Mammary epithelial cell (primary cell): ENCODE measurements at regions of chr1 and their contacts with region 1.

Region 1: DNA sequence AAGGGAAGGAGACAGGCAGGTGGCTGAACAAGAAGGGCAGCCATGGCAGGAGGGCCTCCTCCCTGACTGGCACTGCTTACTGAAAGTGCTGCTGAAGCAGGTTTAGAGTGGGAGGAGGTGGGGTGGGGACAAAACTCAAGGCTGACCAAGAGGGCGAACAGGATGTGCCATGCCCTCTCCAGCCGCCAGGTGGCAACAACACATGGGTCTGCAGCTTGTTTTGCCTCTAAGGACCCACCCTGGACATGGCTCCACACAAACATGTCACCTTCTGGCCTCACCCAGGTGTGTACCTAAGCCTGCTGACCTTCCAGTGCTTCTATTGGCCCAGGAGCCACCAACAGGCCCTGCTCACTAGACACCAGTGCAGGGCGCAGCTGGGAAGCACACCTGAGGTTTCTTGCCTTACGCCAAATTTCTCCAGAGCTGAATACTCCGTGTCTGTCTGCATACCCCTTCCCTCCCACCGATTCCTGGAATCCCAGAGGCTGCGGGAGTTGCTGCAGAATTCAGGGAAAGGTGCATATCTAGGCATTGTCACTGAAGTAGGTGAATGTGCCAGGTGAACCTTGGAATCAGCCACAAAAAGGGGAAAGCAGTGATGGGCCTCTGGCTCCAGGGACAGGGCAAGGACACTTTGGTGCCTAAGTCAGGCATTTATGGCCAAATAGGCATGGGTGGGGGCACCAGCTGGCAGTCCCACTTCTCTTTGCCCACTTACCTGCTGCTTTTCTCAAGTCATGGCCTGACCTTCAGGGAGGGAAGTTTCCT is 5.3 kb downstream of the PSRC1 start:
- DNase-seq: peak; percentile 56
- H3K4me3 ChIP-seq: no peak overlapping the region
- H3K27ac ChIP-seq: no peak overlapping the region
- H3K4me1 ChIP-seq: peaks cover 59% of the 10 kb centered on the region
- H3K27me3 ChIP-seq: no peaks in the 10 kb centered on the region
- CTCF ChIP-seq: peak; percentile 92 to 94

Region 2: GRCh38 chr1:109099938-109100773 is 177.5 kb before region 1 on chr1:
- CTCF ChIA-PET with region 1: no interaction called
- dilution Hi-C with region 1: loop called (anchors 10 kb)
- in situ Hi-C with region 1: no loop called
- intact Hi-C with region 1: no loop called
- DNase-seq: peak; percentile 94
- H3K4me3 ChIP-seq: peak overlapping the region; percentile 76 to 90 (median 84)
- H3K27ac ChIP-seq: peak overlapping the region; percentile 80
- H3K4me1 ChIP-seq: peaks cover 8% of the 10 kb centered on the region
- H3K27me3 ChIP-seq: no peaks in the 10 kb centered on the region
- CTCF ChIP-seq: peak; percentile 83 to 93

Region 3: GRCh38 chr1:109254953-109255651 is 22.5 kb before region 1 on chr1:
- CTCF ChIA-PET with region 1: interaction called, 12 read pairs
- dilution Hi-C with region 1: no loop called
- in situ Hi-C with region 1: no loop called
- intact Hi-C with region 1: no loop called
- DNase-seq: no peak
- H3K4me3 ChIP-seq: peak overlapping the region in 2 of 3 experiments; percentile 25 to 26
- H3K27ac ChIP-seq: peak overlapping the region; percentile 54
- H3K4me1 ChIP-seq: peaks cover 52% of the 10 kb centered on the region
- H3K27me3 ChIP-seq: no peaks in the 10 kb centered on the region
- CTCF ChIP-seq: peak; percentile 19 to 45

Region 4: GRCh38 chr1:109341944-109342930 is 64.6 kb after region 1 on chr1:
- CTCF ChIA-PET with region 1: no interaction called
- dilution Hi-C with region 1: loop called (anchors 10 kb)
- in situ Hi-C with region 1: no loop called
- intact Hi-C with region 1: no loop called
- DNase-seq: peak; percentile 19
- H3K4me3 ChIP-seq: no peak overlapping the region
- H3K27ac ChIP-seq: no peak overlapping the region
- H3K4me1 ChIP-seq: no peaks in the 10 kb centered on the region
- H3K27me3 ChIP-seq: no peaks in the 10 kb centered on the region
- CTCF ChIP-seq: no peak

Region 5: DNA sequence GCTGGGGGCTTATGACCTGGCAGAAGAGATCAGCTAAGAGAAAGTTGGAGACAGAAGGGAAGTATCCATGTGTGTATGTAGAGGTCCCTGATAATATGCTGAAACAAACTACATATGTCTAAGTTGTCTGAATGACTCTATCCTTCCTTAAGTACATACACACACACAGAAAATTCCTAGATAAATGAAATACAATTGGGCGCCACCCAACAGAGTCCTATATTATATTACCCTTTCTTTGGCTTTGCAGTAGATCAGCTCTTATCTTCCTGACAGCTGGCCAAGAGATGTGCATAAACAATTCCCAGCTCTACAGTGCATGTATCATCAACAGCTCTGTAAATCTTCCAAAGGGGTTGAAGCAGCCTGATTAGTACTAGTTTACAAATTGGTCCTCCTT is 80.0 kb after region 1 on chr1:
- CTCF ChIA-PET with region 1: no interaction called
- dilution Hi-C with region 1: no loop called
- in situ Hi-C with region 1: no loop called
- intact Hi-C with region 1: no loop called
- DNase-seq: no peak
- H3K4me3 ChIP-seq: no peak overlapping the region
- H3K27ac ChIP-seq: no peak overlapping the region
- H3K4me1 ChIP-seq: peaks cover 4% of the 10 kb centered on the region
- H3K27me3 ChIP-seq: no peaks in the 10 kb centered on the region
- CTCF ChIP-seq: no peak

Region 6: DNA sequence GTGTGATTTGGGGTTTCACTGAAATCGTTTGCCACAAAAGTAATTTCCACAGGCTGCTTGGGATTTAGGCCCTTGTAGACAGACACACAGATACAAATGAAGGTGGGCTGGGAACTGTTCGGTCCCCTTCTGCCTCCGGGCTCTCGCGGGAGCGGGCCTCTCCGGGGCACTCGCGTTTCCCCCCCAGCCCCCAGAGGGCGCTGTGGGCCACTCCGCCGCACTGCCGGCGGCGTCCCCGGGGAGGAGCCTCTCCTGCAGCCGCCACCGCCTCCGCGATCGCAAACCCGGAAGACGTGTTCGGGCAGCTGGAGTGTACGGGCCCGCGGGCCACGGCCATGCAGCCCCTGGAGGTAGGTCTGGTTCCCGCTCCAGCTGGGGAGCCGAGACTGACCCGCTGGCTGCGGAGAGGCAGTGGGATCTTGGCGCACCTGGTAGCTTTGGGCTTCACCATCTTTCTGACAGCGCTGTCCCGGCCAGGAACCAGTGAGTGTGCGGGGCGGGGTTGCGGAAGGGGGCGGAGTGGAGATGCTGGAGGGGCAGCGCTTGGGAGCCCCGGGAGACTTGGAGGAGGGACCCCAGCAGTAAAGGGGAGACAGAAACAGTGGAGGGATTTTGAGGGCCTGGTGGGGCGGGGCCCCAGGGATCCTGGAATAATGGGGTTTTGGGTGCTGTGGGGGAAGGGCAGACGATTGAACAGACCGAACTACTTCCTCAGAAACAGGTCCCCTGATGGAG is 216.4 kb after region 1 on chr1 and contains the start of gene CYB561D1:
- CTCF ChIA-PET with region 1: no interaction called
- dilution Hi-C with region 1: no loop called
- in situ Hi-C with region 1: no loop called
- intact Hi-C with region 1: loop called (anchors 5 kb)
- DNase-seq: peak; percentile 80
- H3K4me3 ChIP-seq: peak within 1 kb of the TSS; percentile 93 to 98 (median 94)
- H3K27ac ChIP-seq: no peak within 1 kb of the TSS
- H3K4me1 ChIP-seq: peaks cover 4% of the 10 kb centered on the region
- H3K27me3 ChIP-seq: no peaks in the 10 kb centered on the region
- CTCF ChIP-seq: peak; percentile 58 to 95
- total RNA-seq, gene CYB561D1: 7.3 to 7.7 TPM